Gastrocnemius medialis (tissue), 4 donors: ENCODE measurements at regions of chr12 and their contacts with region 1.

Region 1: DNA sequence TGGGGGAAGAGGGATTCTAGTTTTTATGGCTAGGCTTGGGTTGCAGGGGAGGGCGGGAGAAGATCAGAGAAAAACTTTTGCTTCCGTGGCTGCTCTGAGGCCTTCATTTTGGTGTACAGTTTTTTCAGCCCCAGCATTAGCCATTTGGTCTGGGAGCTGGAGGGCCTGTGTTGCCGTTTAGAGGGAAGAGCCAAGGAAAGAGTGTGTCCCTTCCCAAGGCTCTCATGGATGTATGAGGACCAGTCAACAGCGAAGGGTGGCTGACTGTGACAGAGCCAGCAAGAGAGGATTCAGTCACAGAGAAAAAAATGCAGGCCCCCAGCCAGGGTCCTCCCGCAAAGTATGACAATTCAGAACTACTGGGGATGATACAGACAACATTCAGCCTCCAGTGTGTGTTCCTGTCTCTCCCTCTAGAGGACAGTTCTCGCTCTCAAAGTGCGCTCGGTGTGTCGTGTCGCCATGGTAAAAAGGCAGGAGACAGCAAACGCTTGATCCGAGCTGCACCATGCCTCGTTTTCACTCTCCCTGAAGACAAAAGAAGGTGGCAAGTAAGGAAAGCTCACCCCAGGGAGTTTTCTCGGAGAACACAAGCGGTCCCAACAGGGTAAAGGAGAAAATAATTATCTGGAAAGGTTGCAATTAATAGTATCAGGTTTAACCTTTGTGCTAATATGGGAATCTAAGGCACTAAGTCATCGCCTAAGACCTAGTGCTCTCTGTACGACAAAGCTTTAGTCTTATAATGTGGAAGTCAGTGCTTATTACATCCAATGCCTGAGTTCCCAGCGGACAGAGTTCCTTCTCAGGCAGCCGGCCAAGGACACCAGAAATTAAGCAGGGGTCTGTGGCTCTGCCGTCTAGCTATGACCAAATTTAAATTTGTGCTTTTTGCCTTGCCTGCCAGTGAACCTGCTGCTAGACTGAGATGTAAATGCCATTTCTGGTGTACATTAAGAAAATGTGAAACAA is 157.3 kb upstream of the PLXNC1 start:
- DNase-seq: peak; percentile 56 to 62
- ATAC-seq: peak; percentile 96 to 98
- H3K4me3 ChIP-seq: peak overlapping the region in 3 of 4 donors; percentile 5 to 42 (median 20)
- H3K27ac ChIP-seq: peak overlapping the region in 2 of 4 donors; percentile 15 to 62
- H3K4me1 ChIP-seq: peaks cover 6 to 9% of the 10 kb centered on the region in 2 donors
- H3K27me3 ChIP-seq: no peaks in the 10 kb centered on the region
- CTCF ChIP-seq: peak; percentile 29 to 69 (median 35)
- POLR2A ChIP-seq: no peak

Region 2: GRCh38 chr12:93502802-93503623 is 488.1 kb before region 1 on chr12:
- in situ Hi-C with region 1: loop called in 1 of 4 experiments (anchors 10 kb)
- intact Hi-C with region 1: no loop called
- DNase-seq: no peak
- ATAC-seq: no peak
- H3K4me3 ChIP-seq: no peak overlapping the region
- H3K27ac ChIP-seq: no peak overlapping the region
- H3K4me1 ChIP-seq: no peaks in the 10 kb centered on the region
- H3K27me3 ChIP-seq: no peaks in the 10 kb centered on the region
- CTCF ChIP-seq: peak; percentile 49 to 79 (median 71)
- POLR2A ChIP-seq: no peak

Region 3: GRCh38 chr12:94047741-94048567 is 56.8 kb after region 1 on chr12:
- in situ Hi-C with region 1: no loop called
- intact Hi-C with region 1: loop called (anchors 5 kb)
- DNase-seq: peak in 1 of 2 donors; percentile 34
- ATAC-seq: peak; percentile 92
- H3K4me3 ChIP-seq: peak overlapping the region in 3 of 4 donors; percentile 10 to 42 (median 26)
- H3K27ac ChIP-seq: peak overlapping the region; percentile 57 to 79 (median 69)
- H3K4me1 ChIP-seq: peaks cover 9 to 15% of the 10 kb centered on the region in 2 donors
- H3K27me3 ChIP-seq: no peaks in the 10 kb centered on the region
- CTCF ChIP-seq: no peak
- POLR2A ChIP-seq: no peak

Region 4: DNA sequence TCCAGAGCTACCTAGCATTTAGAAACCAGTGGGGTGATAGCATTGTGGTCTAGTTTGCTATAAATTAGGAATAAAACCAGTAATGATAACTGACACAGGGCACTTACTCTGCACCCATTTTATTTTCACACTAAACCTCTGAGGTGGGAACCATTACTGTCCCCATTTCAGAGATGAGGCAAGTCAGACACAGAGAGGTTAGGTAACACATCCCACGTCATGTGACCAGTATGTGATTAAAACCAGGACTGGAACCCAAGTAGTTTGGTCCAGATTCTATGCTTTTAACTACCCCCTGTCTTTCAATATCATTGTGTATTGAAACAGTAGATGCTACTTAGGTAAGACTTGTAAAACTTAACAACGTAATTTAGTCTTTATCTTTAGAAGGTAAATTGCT is 267.5 kb after region 1 on chr12:
- in situ Hi-C with region 1: no loop called
- intact Hi-C with region 1: no loop called
- DNase-seq: no peak
- ATAC-seq: no peak
- H3K4me3 ChIP-seq: no peak overlapping the region
- H3K27ac ChIP-seq: no peak overlapping the region
- H3K4me1 ChIP-seq: peaks cover 42 to 47% of the 10 kb centered on the region in 2 donors
- H3K27me3 ChIP-seq: no peaks in the 10 kb centered on the region
- CTCF ChIP-seq: no peak
- POLR2A ChIP-seq: no peak